Naive thymus-derived CD4-positive, alpha-beta T cell (primary cell): ENCODE measurements at regions of chr10 and their contacts with region 1.

Region 1: GRCh38 chr10:119080521-119081260 is at the start of gene EIF3A:
- DNase-seq: peak; percentile 87 to 98 (median 93)
- ATAC-seq: peak; percentile 90
- H3K4me3 ChIP-seq: peak within 1 kb of the TSS; percentile 83
- H3K4me3 Mint-ChIP-seq: peak within 1 kb of the TSS; percentile 86 to 99 (median 98)
- H3K27ac ChIP-seq: peak within 1 kb of the TSS; percentile 91
- H3K27ac Mint-ChIP-seq: peak within 1 kb of the TSS; percentile 93 to 100 (median 98)
- H3K4me1 ChIP-seq: peaks cover 6 to 26% of the 10 kb centered on the region in 2 donors
- H3K4me1 Mint-ChIP-seq: peaks cover 28 to 55% (median 45%) of the 10 kb centered on the region in 7 donors
- H3K27me3 ChIP-seq: no peaks in the 10 kb centered on the region
- H3K27me3 Mint-ChIP-seq: peaks cover 0 to 2% (median 0%) of the 10 kb centered on the region in 5 donors
- total RNA-seq, gene EIF3A: 87.8 to 137 (median 96.0) TPM

Region 2: DNA sequence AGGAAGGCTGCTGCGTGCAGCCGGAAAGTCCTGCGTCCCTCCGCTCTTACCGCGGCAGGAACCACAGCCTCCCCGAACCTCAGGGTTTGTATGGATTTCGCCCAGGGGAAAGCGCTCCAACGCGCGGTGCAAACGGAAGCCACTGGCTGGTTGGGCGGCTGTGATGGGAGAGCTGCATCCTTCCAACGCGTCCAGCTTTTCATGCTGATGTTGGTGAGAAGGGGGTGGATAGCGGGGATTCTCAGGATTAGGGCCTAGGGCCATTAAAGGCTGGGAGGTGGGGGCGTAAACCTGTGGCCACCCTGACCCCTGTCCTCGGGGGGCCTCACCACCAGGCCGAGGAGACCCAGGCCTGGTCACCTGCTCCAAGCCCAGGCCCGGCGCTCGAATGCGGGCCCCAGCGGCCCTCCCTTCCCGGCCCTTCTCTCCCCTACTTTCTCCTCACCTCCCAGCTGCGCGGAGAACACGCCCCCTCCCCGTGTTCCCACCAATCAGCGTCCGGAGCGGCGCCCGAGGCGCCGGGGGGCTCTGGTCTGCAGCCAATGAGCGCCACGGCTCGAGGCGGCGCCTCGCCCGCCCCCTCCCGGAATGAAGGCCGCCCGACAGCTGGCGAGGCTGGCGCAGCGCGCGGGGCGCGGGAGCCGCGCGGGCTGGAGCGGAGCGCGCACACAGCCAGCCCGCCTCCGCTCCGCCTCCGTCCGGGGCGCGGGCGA is 51.6 kb before region 1 on chr10:
- CTCF ChIA-PET with region 1: no interaction called
- POLR2A ChIA-PET with region 1: interaction called, 5 read pairs
- intact Hi-C with region 1: loop called in 1 of 2 experiments (anchors 2 kb)
- DNase-seq: peak; percentile 50 to 81 (median 60)
- ATAC-seq: peak; percentile 85
- H3K4me3 ChIP-seq: peak overlapping the region; percentile 43
- H3K4me3 Mint-ChIP-seq: peak overlapping the region; percentile 59 to 87 (median 78)
- H3K27ac ChIP-seq: no peak overlapping the region
- H3K27ac Mint-ChIP-seq: peak overlapping the region in 3 of 9 donors; percentile 17 to 65 (median 55)
- H3K4me1 ChIP-seq: no peaks in the 10 kb centered on the region
- H3K4me1 Mint-ChIP-seq: peaks cover 6 to 24% (median 10%) of the 10 kb centered on the region in 7 donors
- H3K27me3 ChIP-seq: no peaks in the 10 kb centered on the region
- H3K27me3 Mint-ChIP-seq: peaks cover 0 to 12% (median 0%) of the 10 kb centered on the region in 5 donors

Region 3: GRCh38 chr10:119090968-119091367 is 10.3 kb after region 1 on chr10:
- CTCF ChIA-PET with region 1: no interaction called
- POLR2A ChIA-PET with region 1: interaction called, 12 read pairs
- intact Hi-C with region 1: loop called (anchors 1 kb)
- DNase-seq: peak in 7 of 9 donors; percentile 39 to 71 (median 48)
- ATAC-seq: peak; percentile 95
- H3K4me3 ChIP-seq: peak overlapping the region; percentile 3
- H3K4me3 Mint-ChIP-seq: peak overlapping the region; percentile 47 to 77 (median 67)
- H3K27ac ChIP-seq: peak overlapping the region; percentile 58
- H3K27ac Mint-ChIP-seq: peak overlapping the region; percentile 76 to 96 (median 93)
- H3K4me1 ChIP-seq: peaks cover 22 to 43% of the 10 kb centered on the region in 2 donors
- H3K4me1 Mint-ChIP-seq: peaks cover 23 to 53% (median 31%) of the 10 kb centered on the region in 7 donors
- H3K27me3 ChIP-seq: no peaks in the 10 kb centered on the region
- H3K27me3 Mint-ChIP-seq: no peaks in the 10 kb centered on the region

Region 4: DNA sequence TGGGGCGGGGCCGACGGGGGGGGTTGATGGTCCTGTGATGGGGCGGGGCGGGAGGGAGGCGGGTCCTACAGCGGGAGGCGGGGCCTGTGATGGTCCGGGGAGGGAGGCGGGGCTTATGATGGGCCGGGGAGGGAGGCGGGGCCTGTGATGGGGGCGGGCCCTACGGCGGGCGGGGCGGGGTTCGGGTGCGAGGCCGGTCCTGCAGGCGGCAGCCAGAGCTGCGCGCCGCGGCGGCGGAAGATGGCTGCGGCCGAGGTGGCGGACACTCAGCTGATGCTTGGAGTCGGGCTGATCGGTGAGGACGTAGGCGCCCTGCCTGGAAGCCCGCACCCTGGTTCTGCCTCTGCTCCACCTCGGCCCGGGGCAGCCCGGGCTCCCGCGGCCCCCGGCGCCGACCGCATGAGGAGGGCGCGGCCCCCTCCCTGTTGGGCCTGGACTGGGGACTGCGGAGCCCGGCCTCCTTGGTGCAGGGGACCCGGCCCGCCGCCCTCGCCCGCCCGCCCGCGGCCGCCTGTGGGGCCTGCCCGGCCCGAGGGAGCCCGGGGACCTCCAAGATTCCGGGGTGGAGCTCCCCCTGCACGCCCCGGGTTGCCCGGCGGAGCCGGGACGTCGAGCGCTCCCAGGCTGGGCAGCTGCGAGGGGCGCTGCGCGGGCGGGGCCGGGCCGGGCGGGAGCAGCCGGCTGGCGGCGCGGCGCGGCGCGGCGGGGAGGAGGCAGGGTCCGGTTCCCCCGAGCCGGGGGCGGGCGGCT is 23.4 kb after region 1 on chr10 and contains the start of gene DENND10:
- CTCF ChIA-PET with region 1: no interaction called
- POLR2A ChIA-PET with region 1: interaction called, 53 read pairs
- intact Hi-C with region 1: loop called (anchors 1 kb)
- DNase-seq: peak; percentile 18 to 80 (median 51)
- ATAC-seq: peak; percentile 93
- H3K4me3 ChIP-seq: peak within 1 kb of the TSS; percentile 45
- H3K4me3 Mint-ChIP-seq: peak within 1 kb of the TSS; percentile 65 to 94 (median 85)
- H3K27ac ChIP-seq: peak within 1 kb of the TSS; percentile 69
- H3K27ac Mint-ChIP-seq: peak within 1 kb of the TSS; percentile 62 to 96 (median 84)
- H3K4me1 ChIP-seq: peaks cover 6 to 20% of the 10 kb centered on the region in 2 donors
- H3K4me1 Mint-ChIP-seq: peaks cover 5 to 35% (median 14%) of the 10 kb centered on the region in 7 donors
- H3K27me3 ChIP-seq: no peaks in the 10 kb centered on the region
- H3K27me3 Mint-ChIP-seq: no peaks in the 10 kb centered on the region
- total RNA-seq, gene DENND10: 22.1 to 41.7 (median 28.8) TPM

Region 5: DNA sequence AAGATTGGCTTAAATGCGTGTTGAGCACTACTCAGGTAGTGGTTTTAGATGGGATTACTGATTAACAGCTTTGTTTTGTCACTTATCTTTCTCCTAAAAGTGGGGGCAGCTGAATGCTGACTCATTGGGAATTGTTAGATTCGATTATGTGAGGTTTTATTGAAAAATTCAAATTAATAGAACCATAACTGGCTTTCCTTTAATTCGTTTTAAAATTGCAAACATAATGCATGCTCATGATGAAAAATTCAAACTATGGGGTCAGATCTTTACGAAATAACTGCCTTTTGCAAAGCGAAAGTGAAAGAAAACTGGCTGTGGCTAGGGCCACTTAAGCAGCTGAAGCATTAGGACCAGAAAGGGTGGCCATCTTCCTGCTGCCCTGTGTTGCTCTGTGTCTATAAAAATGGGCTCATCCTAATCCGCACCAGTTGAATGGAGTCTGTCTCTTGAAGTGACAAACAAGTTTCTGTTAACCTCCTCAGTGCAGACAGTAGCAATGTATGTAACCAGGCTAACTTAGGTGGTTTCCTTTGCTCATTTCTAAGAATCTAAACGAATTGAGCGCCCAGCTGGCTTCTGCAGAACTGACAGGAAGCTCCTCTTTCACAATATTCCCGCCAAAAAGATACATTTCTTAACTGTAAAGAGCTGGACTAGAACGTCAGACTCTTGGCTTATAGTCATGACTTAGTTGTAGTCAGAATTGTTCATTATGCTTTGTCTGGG is 51.0 kb after region 1 on chr10:
- CTCF ChIA-PET with region 1: no interaction called
- POLR2A ChIA-PET with region 1: interaction called, 4 read pairs
- intact Hi-C with region 1: loop called (anchors 1 to 2 kb)
- DNase-seq: peak in 8 of 9 donors; percentile 24 to 61 (median 40)
- ATAC-seq: peak; percentile 77
- H3K4me3 ChIP-seq: peak overlapping the region; percentile 73
- H3K4me3 Mint-ChIP-seq: peak overlapping the region; percentile 81 to 96 (median 91)
- H3K27ac ChIP-seq: peak overlapping the region; percentile 66
- H3K27ac Mint-ChIP-seq: peak overlapping the region; percentile 92 to 97 (median 95)
- H3K4me1 ChIP-seq: peaks cover 8 to 16% of the 10 kb centered on the region in 2 donors
- H3K4me1 Mint-ChIP-seq: peaks cover 16 to 59% (median 32%) of the 10 kb centered on the region in 7 donors
- H3K27me3 ChIP-seq: no peaks in the 10 kb centered on the region
- H3K27me3 Mint-ChIP-seq: no peaks in the 10 kb centered on the region

Region 6: GRCh38 chr10:119165171-119166110 is 84.8 kb after region 1 on chr10 and contains the start of gene SFXN4:
- CTCF ChIA-PET with region 1: no interaction called
- POLR2A ChIA-PET with region 1: interaction called, 4 read pairs
- intact Hi-C with region 1: loop called (anchors 1 kb)
- DNase-seq: peak; percentile 72 to 87 (median 84)
- ATAC-seq: peak; percentile 98
- H3K4me3 ChIP-seq: peak within 1 kb of the TSS; percentile 95
- H3K4me3 Mint-ChIP-seq: peak within 1 kb of the TSS; percentile 89 to 95 (median 92)
- H3K27ac ChIP-seq: peak within 1 kb of the TSS; percentile 88
- H3K27ac Mint-ChIP-seq: peak within 1 kb of the TSS; percentile 85 to 98 (median 95)
- H3K4me1 ChIP-seq: peaks cover 12 to 15% of the 10 kb centered on the region in 2 donors
- H3K4me1 Mint-ChIP-seq: peaks cover 22 to 39% (median 32%) of the 10 kb centered on the region in 7 donors
- H3K27me3 ChIP-seq: no peaks in the 10 kb centered on the region
- H3K27me3 Mint-ChIP-seq: no peaks in the 10 kb centered on the region
- total RNA-seq, gene SFXN4: 11.8 to 28.1 (median 23.1) TPM

Region 7: DNA sequence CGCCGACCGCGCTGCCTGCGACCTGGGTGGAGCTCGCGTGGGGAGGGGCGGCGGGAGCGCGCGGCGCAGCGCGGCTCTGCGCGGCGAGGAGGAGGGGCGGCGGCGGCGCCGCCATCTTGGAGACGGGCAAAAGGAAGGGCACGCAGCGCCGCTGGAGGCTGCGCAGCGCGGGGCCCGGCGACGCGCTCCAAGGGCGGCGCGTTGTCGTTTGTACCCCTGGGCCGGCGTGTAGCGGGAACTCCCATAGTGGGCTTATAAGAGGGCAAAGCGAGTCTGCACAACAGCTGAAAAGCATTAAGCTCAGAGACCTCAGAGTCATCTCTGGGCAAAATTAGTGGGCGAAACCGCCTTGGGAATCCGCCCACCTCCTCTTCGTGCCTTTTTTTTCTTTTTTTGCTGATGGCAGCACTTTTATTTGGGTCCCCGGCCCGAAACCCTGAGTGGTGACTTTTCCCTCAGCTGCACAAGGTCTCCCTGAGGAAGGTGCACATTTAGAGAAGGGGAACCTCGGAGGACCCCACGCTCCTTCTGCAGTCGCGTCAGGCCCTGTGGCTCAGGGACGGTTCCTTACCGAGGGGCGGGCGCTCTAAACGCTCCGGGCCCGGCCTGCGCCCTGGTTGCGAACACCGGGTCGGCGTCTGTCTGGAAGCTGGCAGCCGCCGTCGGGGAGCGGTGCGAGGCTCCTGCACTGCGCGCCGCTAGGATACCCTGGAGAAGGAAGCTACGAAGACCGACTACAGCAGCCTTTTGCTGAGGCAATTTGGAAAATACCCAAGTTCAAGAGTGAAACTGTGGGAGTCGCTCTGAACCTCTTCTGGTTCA is 792.4 kb after region 1 on chr10:
- CTCF ChIA-PET with region 1: no interaction called
- POLR2A ChIA-PET with region 1: interaction called, 3 read pairs
- intact Hi-C with region 1: loop called (anchors 2 to 10 kb)
- DNase-seq: peak; percentile 81 to 88 (median 86)
- ATAC-seq: peak; percentile 96
- H3K4me3 ChIP-seq: peak overlapping the region; percentile 97
- H3K4me3 Mint-ChIP-seq: peak overlapping the region; percentile 82 to 92 (median 89)
- H3K27ac ChIP-seq: peak overlapping the region; percentile 84
- H3K27ac Mint-ChIP-seq: peak overlapping the region; percentile 79 to 95 (median 92)
- H3K4me1 ChIP-seq: peaks cover 21 to 28% of the 10 kb centered on the region in 2 donors
- H3K4me1 Mint-ChIP-seq: peaks cover 23 to 46% (median 41%) of the 10 kb centered on the region in 7 donors
- H3K27me3 ChIP-seq: no peaks in the 10 kb centered on the region
- H3K27me3 Mint-ChIP-seq: peaks cover 0 to 6% (median 0%) of the 10 kb centered on the region in 5 donors